HCT116 (cell line): ENCODE measurements at regions of chr11 and their contacts with region 1.

Region 1: GRCh38 chr11:18115360-18116127 is 9.7 kb upstream of the SAAL1 start:
- DNase-seq: peak; percentile 76
- ATAC-seq: peak; percentile 98
- H3K4me3 ChIP-seq: no peak overlapping the region; a peak in 1 of 4 replicates
- H3K27ac ChIP-seq: no peak overlapping the region
- H3K4me1 ChIP-seq: peaks cover 0 to 4% of the 10 kb centered on the region in 2 experiments; a peak in 2 of 4 replicates
- H3K27me3 ChIP-seq: peaks cover 22% of the 10 kb centered on the region
- CTCF ChIP-seq: peak; percentile 76 to 94 (median 86)
- POLR2A ChIP-seq: no peak
- RAD21 ChIP-seq: peak; percentile 90

Region 2: GRCh38 chr11:18243783-18244362 is 128.3 kb after region 1 on chr11:
- CTCF ChIA-PET with region 1: interaction called, 18 read pairs
- POLR2A ChIA-PET with region 1: no interaction called
- RAD21 ChIA-PET with region 1: no interaction called
- intact Hi-C with region 1: no loop called
- DNase-seq: peak; percentile 63
- ATAC-seq: peak; percentile 87
- H3K4me3 ChIP-seq: no peak overlapping the region
- H3K27ac ChIP-seq: no peak overlapping the region
- H3K4me1 ChIP-seq: no peaks in the 10 kb centered on the region; a peak in 1 of 4 replicates
- H3K27me3 ChIP-seq: no peaks in the 10 kb centered on the region
- CTCF ChIP-seq: peak; percentile 65 to 94 (median 80); a peak in 5 of 6 replicates
- POLR2A ChIP-seq: no peak
- RAD21 ChIP-seq: peak; percentile 85

Region 3: GRCh38 chr11:18540207-18541009 is 424.9 kb after region 1 on chr11:
- CTCF ChIA-PET with region 1: interaction called, 5 read pairs
- POLR2A ChIA-PET with region 1: no interaction called
- RAD21 ChIA-PET with region 1: no interaction called
- intact Hi-C with region 1: loop called (anchors 10 kb)
- DNase-seq: no peak
- ATAC-seq: peak; percentile 89
- H3K4me3 ChIP-seq: no peak overlapping the region
- H3K27ac ChIP-seq: no peak overlapping the region
- H3K4me1 ChIP-seq: no peaks in the 10 kb centered on the region
- H3K27me3 ChIP-seq: no peaks in the 10 kb centered on the region
- CTCF ChIP-seq: peak; percentile 49 to 82 (median 71); a peak in 5 of 6 replicates
- POLR2A ChIP-seq: no peak
- RAD21 ChIP-seq: peak; percentile 81

Region 4: GRCh38 chr11:18802381-18803257 is 687.1 kb after region 1 on chr11:
- CTCF ChIA-PET with region 1: interaction called, 8 read pairs
- POLR2A ChIA-PET with region 1: no interaction called
- RAD21 ChIA-PET with region 1: no interaction called
- intact Hi-C with region 1: loop called (anchors 5 kb)
- DNase-seq: peak; percentile 58
- ATAC-seq: peak; percentile 88
- H3K4me3 ChIP-seq: no peak overlapping the region; a peak in 1 of 4 replicates
- H3K27ac ChIP-seq: no peak overlapping the region
- H3K4me1 ChIP-seq: peaks cover 0 to 4% of the 10 kb centered on the region in 2 experiments; a peak in 1 of 4 replicates
- H3K27me3 ChIP-seq: peaks cover 13% of the 10 kb centered on the region; the same call in 1 of the 2 replicates
- CTCF ChIP-seq: peak; percentile 55 to 76 (median 76); a peak in 5 of 6 replicates
- POLR2A ChIP-seq: no peak
- RAD21 ChIP-seq: peak; percentile 72